Activated CD4-positive, alpha-beta memory T cell treated with anti-CD3 and anti-CD28 coated beads for 36 hours (primary cell): ENCODE measurements at regions of chr21 and their contacts with region 1.

Region 1: DNA sequence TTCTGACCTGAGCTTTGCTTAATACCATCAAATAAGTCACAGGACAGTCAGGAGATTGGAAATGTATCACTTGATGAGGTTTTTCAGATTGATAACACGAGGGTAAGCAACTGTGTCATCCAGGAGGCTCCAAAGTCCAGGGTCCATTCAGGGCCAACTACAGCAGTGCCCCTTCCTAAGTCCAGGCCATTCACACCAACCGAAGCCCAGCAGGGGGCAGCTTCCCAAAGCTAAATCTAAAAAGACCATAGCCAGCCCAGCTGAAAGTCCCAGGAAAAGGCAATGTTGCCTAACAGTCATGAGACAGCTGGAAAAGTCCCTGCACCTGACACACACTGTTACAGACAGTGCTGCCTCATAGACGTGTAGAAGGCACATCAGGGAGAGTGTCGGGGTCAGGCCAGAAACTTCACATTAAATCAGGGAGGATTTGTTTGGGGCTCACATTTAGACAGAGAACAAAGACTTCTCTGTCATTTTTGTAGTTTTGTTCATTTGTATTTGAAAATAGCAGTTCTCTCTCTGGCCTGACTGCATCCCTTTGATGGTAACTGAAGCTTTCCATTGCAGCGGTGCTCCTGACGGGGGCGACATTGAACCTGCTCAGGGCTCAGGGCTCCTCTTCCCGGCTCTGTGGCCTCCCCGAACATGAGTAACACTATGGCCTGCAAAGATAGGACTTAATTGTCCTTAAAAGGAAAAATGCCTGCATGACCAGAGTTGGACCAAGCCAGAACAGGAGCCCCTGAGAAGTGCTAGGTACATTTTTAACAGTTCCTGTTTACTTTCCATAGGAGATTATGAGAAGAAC is 200.4 kb downstream of the NRIP1 start:
- DNase-seq: peak; percentile 66
- H3K4me3 Mint-ChIP-seq: no peak overlapping the region
- H3K27ac Mint-ChIP-seq: no peak overlapping the region
- H3K4me1 Mint-ChIP-seq: no peaks in the 10 kb centered on the region
- H3K27me3 Mint-ChIP-seq: peaks cover 4% of the 10 kb centered on the region

Region 2: DNA sequence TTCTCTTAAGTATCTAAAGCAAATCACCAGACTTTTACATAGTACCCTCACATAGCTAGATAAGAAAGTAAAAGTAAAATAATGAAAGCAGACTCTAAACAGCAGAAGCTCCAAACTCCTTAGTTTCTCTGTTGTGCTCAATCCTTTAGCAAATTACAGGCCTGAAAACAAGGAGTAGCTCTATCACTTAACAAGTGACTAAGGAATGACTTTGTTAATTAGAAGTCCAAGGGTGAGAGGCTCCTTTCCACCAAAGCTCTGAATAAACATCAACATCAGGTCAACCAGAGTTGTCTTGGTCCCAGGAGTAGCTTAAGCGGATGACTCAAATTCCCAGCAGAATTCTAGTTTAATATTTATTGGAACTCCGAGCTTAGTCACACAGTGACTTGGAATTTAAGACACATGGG is 194.4 kb after region 1 on chr21:
- CTCF ChIA-PET with region 1: no interaction called
- POLR2A ChIA-PET with region 1: no interaction called
- intact Hi-C with region 1: no loop called
- DNase-seq: no peak
- H3K4me3 Mint-ChIP-seq: peak overlapping the region; percentile 44
- H3K27ac Mint-ChIP-seq: no peak overlapping the region
- H3K4me1 Mint-ChIP-seq: peaks cover 72% of the 10 kb centered on the region
- H3K27me3 Mint-ChIP-seq: peaks cover 9% of the 10 kb centered on the region

Region 3: GRCh38 chr21:15592271-15592860 is 728.0 kb after region 1 on chr21:
- CTCF ChIA-PET with region 1: interaction called, 3 read pairs
- POLR2A ChIA-PET with region 1: no interaction called
- intact Hi-C with region 1: loop called (anchors 5 kb)
- DNase-seq: no peak
- H3K4me3 Mint-ChIP-seq: no peak overlapping the region
- H3K27ac Mint-ChIP-seq: no peak overlapping the region
- H3K4me1 Mint-ChIP-seq: no peaks in the 10 kb centered on the region
- H3K27me3 Mint-ChIP-seq: peaks cover 3% of the 10 kb centered on the region